Right ventricle myocardium superior (tissue), 1 donor: ENCODE measurements at regions of chr7 and their contacts with region 1.

Region 1: DNA sequence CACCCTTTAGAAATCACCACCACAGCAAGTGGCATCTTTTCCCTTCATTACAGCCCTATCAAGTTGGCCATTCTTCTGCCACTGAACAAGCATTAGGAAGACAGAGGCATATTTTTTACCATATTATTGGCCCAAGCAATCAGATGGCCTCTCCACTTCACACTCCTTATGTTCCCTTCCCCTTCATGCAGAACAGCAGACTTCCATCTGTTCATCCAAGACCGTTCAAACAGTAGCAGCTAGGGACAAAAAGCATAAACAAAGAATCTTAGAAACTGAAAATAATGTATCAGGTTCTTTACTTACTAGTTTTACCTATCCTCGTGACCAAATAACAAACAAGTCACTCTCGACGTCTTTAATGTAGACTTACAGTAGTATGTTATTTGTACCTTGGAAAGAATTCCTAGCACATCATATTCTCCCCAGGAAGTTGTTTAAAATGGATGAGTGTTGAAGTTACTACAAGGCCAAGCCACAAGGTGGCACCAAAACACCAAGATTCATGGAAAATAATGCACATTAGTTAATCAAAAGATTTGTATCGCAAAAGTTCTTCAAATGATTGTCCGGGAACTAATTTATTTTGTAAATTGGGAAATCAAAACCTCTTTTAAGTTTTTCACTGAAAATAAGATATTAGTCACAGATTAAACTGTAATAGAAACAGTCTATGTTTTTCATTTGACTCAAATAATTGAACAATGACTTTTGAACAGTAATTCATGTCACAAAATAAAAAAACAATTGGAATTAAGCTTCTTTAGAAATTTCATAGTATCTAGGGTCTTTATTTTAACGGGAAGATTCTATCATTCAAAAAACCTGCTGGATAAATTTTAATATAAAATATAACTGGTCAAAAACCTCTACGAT is 112.1 kb downstream of the VPS41 start:
- DNase-seq: no peak
- ATAC-seq: no peak

Region 2: GRCh38 chr7:38463277-38464225 is 333.3 kb before region 1 on chr7:
- intact Hi-C with region 1: no loop called
- DNase-seq: peak; percentile 52
- ATAC-seq: no peak

Region 3: DNA sequence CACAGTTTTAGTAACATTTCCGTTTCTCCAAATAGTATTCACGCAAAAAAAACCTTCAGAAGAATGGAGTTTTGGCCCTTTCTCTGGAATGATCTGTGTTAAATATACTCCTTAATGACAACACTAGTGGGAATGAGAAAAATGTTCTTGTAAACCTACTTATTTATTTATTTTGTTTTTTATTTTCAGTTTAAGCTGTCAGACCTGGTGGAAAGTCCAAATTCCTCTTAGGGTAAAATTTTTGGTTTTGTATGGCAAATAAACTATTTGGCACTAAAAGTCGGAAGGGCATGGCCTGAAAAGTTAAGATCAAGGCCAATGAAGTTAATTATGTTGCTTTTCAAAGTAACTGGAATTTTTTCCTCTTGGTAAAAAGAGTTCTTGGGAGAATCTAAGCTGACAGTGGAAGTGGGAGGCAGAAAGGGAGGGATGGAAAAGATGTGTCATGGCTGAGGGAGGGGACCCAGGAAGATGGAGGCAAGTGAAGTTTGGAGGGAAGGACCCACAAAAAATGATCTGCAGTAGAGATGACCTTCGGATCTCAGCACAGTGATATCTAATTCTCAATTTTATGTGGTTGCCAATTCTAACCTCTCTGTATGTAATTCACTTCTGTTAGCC is 145.7 kb after region 1 on chr7:
- intact Hi-C with region 1: no loop called
- DNase-seq: no peak
- ATAC-seq: no peak

Region 4: GRCh38 chr7:39465055-39465929 is 668.4 kb after region 1 on chr7:
- intact Hi-C with region 1: loop called (anchors 2 kb)
- DNase-seq: no peak
- ATAC-seq: peak; percentile 86

Region 5: GRCh38 chr7:39517240-39517639 is 720.4 kb after region 1 on chr7:
- intact Hi-C with region 1: loop called (anchors 2 kb)
- DNase-seq: no peak
- ATAC-seq: no peak